IMR-90 (cell line): ENCODE measurements at regions of chr4 and their contacts with region 1.

Region 1: DNA sequence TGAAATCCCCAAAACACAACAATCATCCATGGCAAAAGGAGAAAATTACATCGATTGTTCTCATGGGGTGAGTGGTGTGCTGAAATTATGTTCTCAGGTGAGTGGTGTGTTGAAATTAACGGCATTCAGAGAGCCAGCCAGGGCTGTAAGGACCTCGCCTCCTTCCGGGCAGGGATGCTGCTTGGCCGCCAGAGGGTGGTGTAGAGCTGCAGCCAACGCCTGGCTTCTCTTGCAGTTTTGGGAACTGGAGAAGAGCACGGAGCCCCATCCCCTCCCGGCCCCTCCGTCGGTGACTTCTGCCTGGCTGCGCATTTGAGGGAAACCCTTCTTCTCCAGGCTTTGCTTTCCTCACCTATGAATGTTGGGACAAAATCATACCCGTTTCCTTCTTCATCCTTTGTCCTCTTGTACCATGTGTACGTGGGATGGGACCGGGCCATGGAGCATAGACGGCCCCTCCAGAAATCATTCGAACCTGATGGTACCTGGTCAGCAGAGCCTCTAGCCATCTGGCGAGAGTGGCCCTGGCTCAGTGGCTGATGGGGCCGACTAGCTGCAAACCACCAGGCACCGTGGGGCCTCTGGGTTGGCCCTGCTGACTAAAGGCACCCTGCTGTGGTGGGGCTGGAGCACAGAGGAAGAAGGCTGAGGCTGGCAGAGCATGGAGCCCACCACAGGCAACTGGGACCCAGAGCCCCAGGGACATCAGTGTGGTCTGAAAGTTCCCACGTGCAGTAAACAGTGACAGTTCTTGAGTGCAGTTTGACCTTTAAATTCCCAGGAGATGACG is 28.4 kb downstream of the TRMT44 start:
- DNase-seq: peak; percentile 57
- ATAC-seq: peak; percentile 53
- H3K4me3 ChIP-seq: no peak overlapping the region
- H3K27ac ChIP-seq: no peak overlapping the region
- H3K4me1 ChIP-seq: peaks cover 22% of the 10 kb centered on the region
- H3K27me3 ChIP-seq: no peaks in the 10 kb centered on the region
- CTCF ChIP-seq: peak; percentile 94
- POLR2A ChIP-seq: no peak
- RAD21 ChIP-seq: peak; percentile 94

Region 2: DNA sequence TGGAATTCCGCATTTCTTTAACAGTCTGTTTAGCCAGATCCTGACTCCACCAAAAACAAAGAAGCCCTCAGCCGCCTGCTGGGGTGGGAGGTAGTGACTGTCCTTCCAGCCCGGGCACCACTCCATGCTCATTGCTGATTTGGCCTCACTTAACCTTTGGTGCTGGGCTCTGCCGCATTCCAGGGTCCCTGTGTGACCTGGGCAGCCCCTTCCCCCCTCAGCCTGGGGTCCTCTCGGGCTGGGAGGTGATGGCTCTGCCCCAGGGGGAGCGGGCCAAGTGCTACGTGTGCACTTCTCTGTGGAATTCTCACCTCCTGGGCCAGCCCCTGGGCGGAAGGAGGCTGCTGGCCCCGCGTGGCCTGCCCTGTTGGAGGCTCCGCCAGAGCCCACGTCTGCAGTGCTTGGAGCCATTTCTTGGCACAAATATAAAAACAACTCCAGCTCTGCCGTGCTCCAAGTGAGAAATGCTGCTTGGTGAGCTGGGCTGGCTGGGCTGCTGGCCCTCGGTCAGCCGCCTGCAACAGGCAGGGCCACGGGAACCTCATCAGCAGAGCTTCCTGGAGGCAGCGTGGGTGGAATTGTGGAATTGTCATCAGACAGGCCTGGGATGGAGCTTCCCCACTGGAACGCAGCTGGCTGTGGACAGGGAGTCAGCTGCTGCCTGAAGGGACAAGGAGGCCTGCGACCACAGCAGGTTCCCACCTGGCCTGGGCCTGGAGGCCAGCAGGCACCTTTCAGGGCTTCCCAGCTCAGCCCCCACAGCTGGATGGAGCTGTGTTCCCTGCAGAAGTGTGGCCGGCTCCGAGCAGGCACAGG is 37.6 kb after region 1 on chr4:
- CTCF ChIA-PET with region 1: interaction called, 3 read pairs
- POLR2A ChIA-PET with region 1: no interaction called
- dilution Hi-C with region 1: no loop called
- in situ Hi-C with region 1: no loop called
- intact Hi-C with region 1: loop called (anchors 2 kb)
- DNase-seq: peak; percentile 74
- ATAC-seq: peak; percentile 83
- H3K4me3 ChIP-seq: no peak overlapping the region
- H3K27ac ChIP-seq: peak overlapping the region; percentile 70; the same call in 1 of the 2 replicates
- H3K4me1 ChIP-seq: peaks cover 17% of the 10 kb centered on the region; the same call in 1 of the 2 replicates
- H3K27me3 ChIP-seq: peaks cover 18% of the 10 kb centered on the region; the same call in 1 of the 2 replicates
- CTCF ChIP-seq: no peak
- POLR2A ChIP-seq: no peak
- RAD21 ChIP-seq: no peak

Region 3: DNA sequence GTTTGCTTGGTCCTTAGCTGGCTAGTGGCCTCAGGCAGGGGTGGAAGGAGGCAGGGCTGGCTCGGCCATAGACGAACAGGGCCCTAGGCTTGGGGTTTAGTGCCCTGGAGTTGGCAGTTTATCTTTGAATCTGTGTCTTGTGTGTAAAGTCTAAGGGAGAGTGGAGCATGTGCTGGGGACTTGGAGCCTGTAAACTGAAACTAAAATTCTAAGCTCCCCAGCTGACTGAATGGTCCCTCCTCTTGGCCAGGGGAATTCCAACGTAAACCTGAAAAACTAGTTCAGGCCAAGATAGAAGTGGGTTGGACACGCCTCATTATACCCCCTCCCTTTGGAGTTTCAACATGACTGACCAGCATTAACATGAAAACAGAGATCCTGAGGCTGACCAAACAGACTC is 65.2 kb after region 1 on chr4:
- CTCF ChIA-PET with region 1: no interaction called
- POLR2A ChIA-PET with region 1: no interaction called
- dilution Hi-C with region 1: no loop called
- in situ Hi-C with region 1: no loop called
- intact Hi-C with region 1: loop called (anchors 2 kb)
- DNase-seq: peak; percentile 66
- ATAC-seq: peak; percentile 65
- H3K4me3 ChIP-seq: no peak overlapping the region
- H3K27ac ChIP-seq: peak overlapping the region; percentile 86; the same call in 1 of the 2 replicates
- H3K4me1 ChIP-seq: peaks cover 8% of the 10 kb centered on the region; the same call in 1 of the 2 replicates
- H3K27me3 ChIP-seq: no peaks in the 10 kb centered on the region; the same call in none of the 2 replicates
- CTCF ChIP-seq: no peak
- POLR2A ChIP-seq: no peak
- RAD21 ChIP-seq: no peak

Region 4: GRCh38 chr4:8547108-8547970 is 78.4 kb after region 1 on chr4:
- CTCF ChIA-PET with region 1: interaction called, 3 read pairs
- POLR2A ChIA-PET with region 1: no interaction called
- dilution Hi-C with region 1: no loop called
- in situ Hi-C with region 1: no loop called
- intact Hi-C with region 1: loop called (anchors 1 kb)
- DNase-seq: peak; percentile 51
- ATAC-seq: peak; percentile 50
- H3K4me3 ChIP-seq: no peak overlapping the region
- H3K27ac ChIP-seq: no peak overlapping the region
- H3K4me1 ChIP-seq: peaks cover 2% of the 10 kb centered on the region; the same call in 1 of the 2 replicates
- H3K27me3 ChIP-seq: peaks cover 29% of the 10 kb centered on the region
- CTCF ChIP-seq: peak; percentile 35
- POLR2A ChIP-seq: no peak
- RAD21 ChIP-seq: peak; percentile 47

Region 5: DNA sequence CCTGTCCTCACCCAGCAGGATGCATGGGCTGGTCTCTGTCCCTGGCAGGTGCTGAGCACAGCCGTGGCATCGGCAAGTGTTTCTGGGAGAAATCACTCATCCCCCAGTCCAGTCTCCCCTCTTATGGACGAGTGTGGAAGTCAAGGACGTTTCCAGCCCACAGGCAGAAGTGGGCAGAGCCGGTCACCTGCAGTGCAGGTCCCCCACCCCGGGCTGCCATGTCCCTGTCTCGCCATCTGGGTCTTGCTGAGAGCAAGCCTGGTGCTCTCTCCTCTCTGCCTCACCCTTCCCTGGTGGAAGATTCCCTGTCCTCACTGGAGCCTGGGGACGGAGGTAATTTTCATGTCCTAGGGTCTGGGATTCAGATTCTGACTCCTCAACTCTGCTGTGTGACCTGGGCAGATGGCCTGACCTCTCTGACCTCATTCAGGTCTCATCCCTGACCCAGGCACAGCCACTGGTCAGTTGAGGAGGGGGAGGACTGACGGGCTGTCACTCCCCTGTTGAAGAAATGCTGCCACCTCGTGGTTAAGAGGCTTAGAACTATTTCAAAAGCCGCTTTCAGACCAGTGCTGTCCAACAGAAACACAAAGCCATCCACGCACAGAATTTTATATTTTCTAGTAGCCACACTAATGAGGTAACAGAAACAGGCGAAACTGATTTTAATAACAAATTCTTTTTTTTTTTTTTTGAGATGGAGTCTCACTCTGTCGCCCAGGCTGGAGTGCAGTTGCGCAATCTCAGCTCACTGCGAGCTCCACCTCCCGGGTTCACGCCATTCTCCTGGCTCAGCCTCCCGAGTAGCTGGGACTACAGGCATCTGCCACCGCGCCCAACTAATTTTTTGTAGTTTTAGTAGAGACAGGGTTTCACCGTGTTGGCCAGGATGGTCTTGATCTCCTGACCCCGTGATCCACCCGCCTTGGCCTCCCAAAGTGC is 125.4 kb after region 1 on chr4:
- CTCF ChIA-PET with region 1: interaction called, 6 read pairs
- POLR2A ChIA-PET with region 1: no interaction called
- dilution Hi-C with region 1: no loop called
- in situ Hi-C with region 1: loop called (anchors 5 kb)
- intact Hi-C with region 1: loop called (anchors 1 kb)
- DNase-seq: peak; percentile 72
- ATAC-seq: peak; percentile 53
- H3K4me3 ChIP-seq: no peak overlapping the region; the same call in 1 of the 2 replicates
- H3K27ac ChIP-seq: no peak overlapping the region
- H3K4me1 ChIP-seq: peaks cover 10% of the 10 kb centered on the region; the same call in 1 of the 2 replicates
- H3K27me3 ChIP-seq: peaks cover 34% of the 10 kb centered on the region
- CTCF ChIP-seq: peak; percentile 84
- POLR2A ChIP-seq: no peak
- RAD21 ChIP-seq: peak; percentile 89